Activated CD4-positive, alpha-beta memory T cell treated with anti-CD3 and anti-CD28 coated beads for 36 hours (primary cell): ENCODE measurements at regions of chr15 and their contacts with region 1.

Region 1: DNA sequence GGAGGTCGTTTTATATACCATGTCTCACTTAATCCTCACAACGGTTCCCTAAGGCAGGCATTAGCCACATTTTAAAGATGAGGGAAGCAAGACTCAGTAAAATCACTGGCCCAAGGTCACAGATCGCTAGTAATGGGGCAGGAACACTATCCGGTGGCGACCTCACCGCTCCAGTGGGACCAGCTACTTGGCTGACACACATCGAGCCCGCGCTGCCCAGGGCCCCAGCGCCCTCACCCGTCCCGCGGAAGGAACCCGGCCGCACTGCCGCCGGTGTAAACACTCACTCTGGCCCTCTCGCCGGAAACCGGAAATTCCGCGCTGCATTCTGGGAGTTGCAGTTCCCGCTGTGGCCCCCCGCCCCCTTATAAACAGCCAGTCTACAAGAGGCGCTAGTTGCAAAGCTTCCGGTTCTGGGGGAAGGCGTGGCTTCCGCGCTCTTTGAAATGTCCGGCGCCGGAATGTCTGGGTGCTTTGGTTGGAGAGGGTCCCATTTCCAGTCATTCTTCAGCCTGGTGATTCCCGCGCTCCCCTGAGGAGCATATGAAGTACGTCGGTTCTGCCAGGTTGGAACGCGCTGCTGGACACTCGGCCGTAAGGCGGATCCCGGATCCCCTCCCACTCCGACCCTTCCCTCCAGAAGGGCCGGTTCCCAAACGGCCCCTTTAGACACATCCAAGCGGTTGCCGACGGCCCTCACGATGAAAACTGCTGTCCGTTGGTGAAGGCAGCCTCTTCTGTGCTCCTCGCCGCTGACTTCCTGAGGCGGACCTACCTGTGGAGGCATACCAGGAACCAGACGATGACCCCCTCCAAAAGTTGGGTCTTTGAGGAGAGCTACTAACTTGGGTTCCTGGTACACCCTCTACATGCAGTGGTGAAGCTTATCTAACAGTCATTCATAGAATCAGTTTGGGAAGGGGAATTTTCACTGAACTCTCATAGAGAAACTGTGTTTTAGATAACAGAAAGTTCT is at the start of gene UBL7:
- DNase-seq: peak; percentile 99
- H3K4me3 Mint-ChIP-seq: peak within 1 kb of the TSS; percentile 98
- H3K27ac Mint-ChIP-seq: peak within 1 kb of the TSS; percentile 99
- H3K4me1 Mint-ChIP-seq: peaks cover 47% of the 10 kb centered on the region
- H3K27me3 Mint-ChIP-seq: no peaks in the 10 kb centered on the region
- total RNA-seq, gene UBL7: 52.3 to 58.2 TPM

Region 2: GRCh38 chr15:73991726-73992593 is 469.2 kb before region 1 on chr15 and contains the start of gene STOML1:
- CTCF ChIA-PET with region 1: interaction called, 3 read pairs
- POLR2A ChIA-PET with region 1: no interaction called
- intact Hi-C with region 1: loop called (anchors 10 kb)
- DNase-seq: peak; percentile 97
- H3K4me3 Mint-ChIP-seq: peak within 1 kb of the TSS; percentile 80
- H3K27ac Mint-ChIP-seq: peak within 1 kb of the TSS; percentile 70
- H3K4me1 Mint-ChIP-seq: peaks cover 30% of the 10 kb centered on the region
- H3K27me3 Mint-ChIP-seq: no peaks in the 10 kb centered on the region
- total RNA-seq, gene STOML1: 7.1 to 10.1 TPM

Region 3: GRCh38 chr15:74382004-74382816 is 78.9 kb before region 1 on chr15:
- CTCF ChIA-PET with region 1: interaction called, 23 read pairs
- POLR2A ChIA-PET with region 1: interaction called, 3 read pairs
- intact Hi-C with region 1: loop called (anchors 2 kb)
- DNase-seq: peak; percentile 86
- H3K4me3 Mint-ChIP-seq: no peak overlapping the region
- H3K27ac Mint-ChIP-seq: peak overlapping the region; percentile 94
- H3K4me1 Mint-ChIP-seq: peaks cover 79% of the 10 kb centered on the region
- H3K27me3 Mint-ChIP-seq: no peaks in the 10 kb centered on the region

Region 4: DNA sequence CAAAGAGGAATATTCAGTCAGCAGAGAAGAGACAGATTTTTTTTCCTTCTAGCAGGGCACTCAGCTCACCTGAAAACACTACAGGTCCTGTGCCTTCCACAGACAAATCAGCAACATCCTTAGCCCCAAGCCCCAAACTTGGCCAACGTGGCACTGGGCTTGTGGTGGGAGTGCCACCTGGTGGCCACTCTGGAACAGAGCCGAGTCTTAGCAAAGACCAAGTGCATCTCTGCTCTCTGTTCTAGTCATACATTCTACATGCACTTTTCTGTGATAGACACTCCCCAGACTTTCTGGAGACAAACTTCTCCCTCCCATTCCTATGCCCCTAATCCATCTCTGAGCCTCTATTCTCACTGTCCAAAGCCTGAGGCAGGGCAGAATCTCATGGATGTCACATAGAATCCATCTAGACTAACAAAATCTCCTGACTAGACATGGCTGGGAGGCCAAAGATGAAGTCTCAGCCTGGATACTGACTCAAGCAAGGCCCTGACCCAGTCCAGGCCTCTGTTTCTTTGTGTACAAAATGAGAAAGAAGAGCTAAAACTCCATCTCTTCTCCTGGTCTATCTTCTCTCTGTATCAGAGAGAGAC is 22.3 kb before region 1 on chr15:
- CTCF ChIA-PET with region 1: interaction called, 13 read pairs
- POLR2A ChIA-PET with region 1: interaction called, 5 read pairs
- intact Hi-C with region 1: loop called (anchors 2 kb)
- DNase-seq: peak; percentile 87
- H3K4me3 Mint-ChIP-seq: no peak overlapping the region
- H3K27ac Mint-ChIP-seq: no peak overlapping the region
- H3K4me1 Mint-ChIP-seq: peaks cover 28% of the 10 kb centered on the region
- H3K27me3 Mint-ChIP-seq: no peaks in the 10 kb centered on the region

Region 5: DNA sequence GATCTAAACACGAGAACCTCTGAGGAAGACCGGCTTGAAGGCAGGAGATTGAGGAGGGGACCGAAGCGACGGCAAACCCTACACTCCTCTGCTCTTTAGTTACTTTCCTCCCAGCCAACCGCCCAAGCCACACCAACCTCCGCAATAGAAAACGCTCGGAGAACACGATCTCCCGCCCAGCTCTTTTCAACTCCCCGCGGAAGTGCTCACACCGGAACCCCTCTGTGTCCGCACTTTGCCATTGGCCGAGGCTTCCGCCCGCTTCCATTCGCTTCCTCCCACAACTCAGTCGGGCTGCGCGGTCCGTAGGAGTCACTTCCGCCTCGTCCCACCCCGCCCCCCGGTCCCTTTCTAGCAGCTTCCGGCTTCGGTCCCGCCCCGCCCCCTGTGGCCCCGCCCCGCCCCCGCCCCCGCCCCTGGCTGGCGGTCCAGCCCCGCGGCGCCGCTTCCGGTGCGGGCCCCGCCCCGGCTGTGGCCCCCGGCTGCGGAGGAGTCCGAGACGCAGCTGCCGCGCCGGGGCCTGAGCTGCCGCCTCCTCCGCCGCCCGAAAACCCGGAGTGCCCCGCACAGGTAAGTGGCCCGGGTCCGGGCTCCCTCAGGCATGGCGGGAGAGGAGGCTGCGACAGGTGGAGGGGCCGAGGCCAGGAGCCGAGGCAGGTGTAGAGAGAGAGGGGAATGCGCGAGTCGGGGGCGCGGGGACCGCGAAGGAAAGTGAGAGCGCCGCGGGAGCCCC is 79.8 kb after region 1 on chr15 and contains the start of gene ARID3B:
- CTCF ChIA-PET with region 1: interaction called, 10 read pairs
- POLR2A ChIA-PET with region 1: interaction called, 19 read pairs
- intact Hi-C with region 1: loop called (anchors 2 kb)
- DNase-seq: peak; percentile 99
- H3K4me3 Mint-ChIP-seq: peak within 1 kb of the TSS; percentile 99
- H3K27ac Mint-ChIP-seq: peak within 1 kb of the TSS; percentile 95
- H3K4me1 Mint-ChIP-seq: peaks cover 48% of the 10 kb centered on the region
- H3K27me3 Mint-ChIP-seq: no peaks in the 10 kb centered on the region
- total RNA-seq, gene ARID3B: 27.3 to 28.6 TPM

Region 6: GRCh38 chr15:74615508-74616365 is 154.6 kb after region 1 on chr15 and contains the start of gene CLK3:
- CTCF ChIA-PET with region 1: interaction called, 5 read pairs
- POLR2A ChIA-PET with region 1: interaction called, 13 read pairs
- intact Hi-C with region 1: loop called (anchors 2 kb)
- DNase-seq: peak; percentile 97
- H3K4me3 Mint-ChIP-seq: peak within 1 kb of the TSS; percentile 91
- H3K27ac Mint-ChIP-seq: peak within 1 kb of the TSS; percentile 94
- H3K4me1 Mint-ChIP-seq: peaks cover 35% of the 10 kb centered on the region
- H3K27me3 Mint-ChIP-seq: no peaks in the 10 kb centered on the region
- total RNA-seq, gene CLK3: 118 to 124 TPM